SK-N-SH (cell line): ENCODE measurements at regions of chr20 and their contacts with region 1.

Region 1: GRCh38 chr20:354298-355064 is 7.6 kb downstream of the NRSN2 start:
- DNase-seq: peak; percentile 90
- H3K4me3 ChIP-seq: peak overlapping the region in 1 of 2 experiments; percentile 54; a peak in 1 of 4 replicates
- H3K27ac ChIP-seq: no peak overlapping the region; a peak in 1 of 4 replicates
- H3K4me1 ChIP-seq: no peaks in the 10 kb centered on the region; a peak in 1 of 4 replicates
- H3K27me3 ChIP-seq: no peaks in the 10 kb centered on the region
- CTCF ChIP-seq: peak; percentile 91
- EP300 ChIP-seq: no peak
- RAD21 ChIP-seq: peak; percentile 96

Region 2: GRCh38 chr20:199996-200395 is 154.5 kb before region 1 on chr20:
- CTCF ChIA-PET with region 1: no interaction called
- POLR2A ChIA-PET with region 1: no interaction called
- DNase-seq: no peak
- H3K4me3 ChIP-seq: no peak overlapping the region
- H3K27ac ChIP-seq: no peak overlapping the region
- H3K4me1 ChIP-seq: no peaks in the 10 kb centered on the region
- H3K27me3 ChIP-seq: no peaks in the 10 kb centered on the region
- CTCF ChIP-seq: no peak
- EP300 ChIP-seq: no peak
- RAD21 ChIP-seq: no peak

Region 3: GRCh38 chr20:278607-279571 is 75.6 kb before region 1 on chr20:
- CTCF ChIA-PET with region 1: no interaction called
- POLR2A ChIA-PET with region 1: no interaction called
- DNase-seq: no peak
- H3K4me3 ChIP-seq: no peak overlapping the region
- H3K27ac ChIP-seq: no peak overlapping the region
- H3K4me1 ChIP-seq: no peaks in the 10 kb centered on the region
- H3K27me3 ChIP-seq: no peaks in the 10 kb centered on the region
- CTCF ChIP-seq: no peak
- EP300 ChIP-seq: no peak
- RAD21 ChIP-seq: no peak

Region 4: DNA sequence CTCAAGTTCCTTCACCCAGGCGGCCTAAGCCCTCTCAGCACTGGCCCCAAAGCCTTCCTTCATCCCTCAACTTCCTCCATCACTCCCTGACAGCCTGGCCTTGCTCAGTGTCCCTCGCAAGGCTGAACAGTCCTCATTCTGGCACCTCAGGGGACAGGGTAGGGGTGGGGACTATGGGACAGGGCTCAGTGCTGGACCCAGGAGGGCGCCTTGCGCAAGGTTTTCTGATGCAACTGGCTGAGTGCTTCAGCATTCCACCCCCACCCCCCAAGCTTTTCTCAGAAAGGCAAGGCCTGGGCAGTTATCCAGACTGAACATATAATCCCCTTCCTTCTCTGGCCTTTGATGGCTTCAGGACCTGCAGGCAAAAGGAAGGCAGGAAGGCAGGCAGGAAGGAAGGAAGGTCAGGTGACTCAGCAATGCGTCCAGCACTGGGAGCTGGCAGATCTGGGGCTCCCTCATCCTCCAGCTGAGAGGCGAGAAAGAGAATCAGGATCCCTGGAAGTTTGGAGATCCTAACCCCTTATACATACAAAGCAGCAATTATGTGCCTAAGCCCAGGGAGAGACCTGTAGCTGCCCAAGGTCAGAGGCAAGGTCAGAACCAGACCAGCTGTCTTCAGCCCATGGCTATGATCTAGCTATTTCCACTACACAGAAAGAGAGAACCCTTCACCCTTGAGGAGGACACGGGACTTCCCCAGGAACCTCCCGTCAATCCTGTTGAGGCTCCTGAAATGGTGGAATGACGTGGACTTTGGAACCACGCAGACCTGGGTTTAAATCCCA is 17.5 kb after region 1 on chr20:
- CTCF ChIA-PET with region 1: interaction called, 24 read pairs
- POLR2A ChIA-PET with region 1: no interaction called
- DNase-seq: no peak
- H3K4me3 ChIP-seq: no peak overlapping the region
- H3K27ac ChIP-seq: peak overlapping the region; percentile 36 to 76
- H3K4me1 ChIP-seq: peaks cover 10 to 27% of the 10 kb centered on the region in 2 experiments; a peak in 3 of 4 replicates
- H3K27me3 ChIP-seq: no peaks in the 10 kb centered on the region
- CTCF ChIP-seq: no peak
- EP300 ChIP-seq: no peak
- RAD21 ChIP-seq: no peak

Region 5: GRCh38 chr20:478949-479429 is 124.5 kb after region 1 on chr20:
- CTCF ChIA-PET with region 1: interaction called, 21 read pairs
- POLR2A ChIA-PET with region 1: no interaction called
- DNase-seq: peak; percentile 56
- H3K4me3 ChIP-seq: no peak overlapping the region; a peak in 1 of 4 replicates
- H3K27ac ChIP-seq: no peak overlapping the region
- H3K4me1 ChIP-seq: no peaks in the 10 kb centered on the region; a peak in 1 of 4 replicates
- H3K27me3 ChIP-seq: no peaks in the 10 kb centered on the region
- CTCF ChIP-seq: peak; percentile 73
- EP300 ChIP-seq: no peak
- RAD21 ChIP-seq: peak; percentile 69